ENCODE measurements at regions of chr14 and their contacts with region 1.

Region 1: GRCh38 chr14:61925043-61925442 is 162.8 kb downstream of the SNAPC1 start:
- DNase-seq: no peak
- H3K4me3 ChIP-seq: no peak overlapping the region
- H3K27ac ChIP-seq: no peak overlapping the region
- H3K27me3 ChIP-seq: no peaks in the 10 kb centered on the region
- CTCF ChIP-seq: peak; percentile 25; the same call in 1 of the 2 replicates

Region 2: GRCh38 chr14:61965030-61965745 is 40.1 kb after region 1 on chr14:
- CTCF ChIA-PET with region 1: no interaction called
- POLR2A ChIA-PET with region 1: interaction called, 10 read pairs
- DNase-seq: peak; percentile 90
- H3K4me3 ChIP-seq: no peak overlapping the region
- H3K27ac ChIP-seq: peak overlapping the region; percentile 40
- H3K27me3 ChIP-seq: no peaks in the 10 kb centered on the region
- CTCF ChIP-seq: no peak

Region 3: DNA sequence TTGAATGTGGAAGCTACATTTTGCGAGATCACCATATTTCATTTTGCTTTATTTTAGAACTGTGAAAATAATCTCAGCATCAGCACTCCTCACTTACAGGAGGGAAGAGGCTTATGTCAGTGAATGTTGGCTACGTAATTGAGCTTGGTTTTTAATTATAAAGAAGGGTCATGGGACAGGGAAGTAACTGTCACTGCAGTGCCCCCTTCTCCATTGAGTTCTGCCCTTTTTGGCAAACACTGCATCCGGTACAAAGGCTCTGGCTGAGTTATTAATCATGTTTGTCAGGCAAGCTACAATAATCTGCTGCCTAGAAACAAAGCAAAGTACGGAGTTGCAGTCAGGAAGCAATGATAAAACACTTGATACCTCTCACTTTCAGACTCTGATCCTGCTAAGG is 383.8 kb after region 1 on chr14:
- CTCF ChIA-PET with region 1: no interaction called
- POLR2A ChIA-PET with region 1: no interaction called
- DNase-seq: no peak
- H3K4me3 ChIP-seq: no peak overlapping the region
- H3K27ac ChIP-seq: no peak overlapping the region
- H3K27me3 ChIP-seq: no peaks in the 10 kb centered on the region
- CTCF ChIP-seq: no peak

Measured in AG04450 (cell line).